Mammary epithelial cell (primary cell): ENCODE measurements at regions of chr5 and their contacts with region 1.

Region 1: GRCh38 chr5:1948663-1949652 is 66.2 kb upstream of the IRX4 start:
- DNase-seq: peak; percentile 99
- H3K4me3 ChIP-seq: peak overlapping the region; percentile 18 to 56 (median 28)
- H3K27ac ChIP-seq: peak overlapping the region; percentile 95
- H3K4me1 ChIP-seq: peaks cover 15% of the 10 kb centered on the region
- H3K27me3 ChIP-seq: no peaks in the 10 kb centered on the region
- CTCF ChIP-seq: no peak

Region 2: GRCh38 chr5:1874771-1875220 is 74.2 kb before region 1 on chr5:
- CTCF ChIA-PET with region 1: no interaction called
- dilution Hi-C with region 1: loop called (anchors 5 kb)
- in situ Hi-C with region 1: no loop called
- intact Hi-C with region 1: no loop called
- DNase-seq: no peak
- H3K4me3 ChIP-seq: no peak overlapping the region
- H3K27ac ChIP-seq: no peak overlapping the region
- H3K4me1 ChIP-seq: no peaks in the 10 kb centered on the region
- H3K27me3 ChIP-seq: no peaks in the 10 kb centered on the region
- CTCF ChIP-seq: no peak

Region 3: DNA sequence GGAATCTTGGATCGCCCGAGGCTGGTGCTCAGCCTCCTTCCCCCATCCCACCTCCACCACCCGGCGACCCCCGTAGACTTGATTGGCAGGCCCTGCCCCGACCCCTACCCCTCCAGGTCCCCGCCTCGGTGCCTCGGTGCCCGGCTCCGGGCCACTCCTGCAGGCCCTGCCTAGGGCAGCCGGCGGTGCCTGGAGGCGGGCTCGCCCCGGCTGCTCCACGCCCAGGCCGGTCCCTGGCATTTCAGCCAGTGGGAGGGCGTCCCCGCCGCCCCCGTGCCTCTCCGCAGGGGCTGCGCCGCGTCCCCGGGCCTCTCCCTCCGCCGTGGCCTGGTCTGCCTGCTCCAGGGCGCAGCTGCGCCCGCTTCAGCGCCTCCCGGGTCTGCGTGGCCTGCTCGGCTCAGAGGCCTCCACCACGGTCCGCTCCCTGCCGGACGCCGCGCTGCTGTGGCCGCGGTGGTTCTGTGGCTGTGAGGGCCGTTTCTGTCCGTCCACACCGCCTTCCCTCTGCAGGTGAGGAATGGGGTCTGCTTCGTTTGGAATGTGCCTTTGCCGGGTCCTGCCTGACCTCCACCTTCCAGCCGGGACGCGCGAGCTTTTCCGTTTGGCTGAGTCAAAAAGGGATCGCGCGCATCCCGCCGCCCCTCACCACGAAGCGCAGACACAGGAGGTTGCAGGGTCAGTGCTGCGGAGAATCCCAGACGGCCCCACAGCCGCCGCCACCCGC is 17.9 kb before region 1 on chr5:
- CTCF ChIA-PET with region 1: no interaction called
- dilution Hi-C with region 1: no loop called
- in situ Hi-C with region 1: no loop called
- intact Hi-C with region 1: loop called (anchors 2 kb)
- DNase-seq: peak; percentile 64
- H3K4me3 ChIP-seq: peak overlapping the region; percentile 48 to 71 (median 66)
- H3K27ac ChIP-seq: peak overlapping the region; percentile 75
- H3K4me1 ChIP-seq: peaks cover 40% of the 10 kb centered on the region
- H3K27me3 ChIP-seq: no peaks in the 10 kb centered on the region
- CTCF ChIP-seq: no peak

Region 4: GRCh38 chr5:1962619-1963355 is 13.8 kb after region 1 on chr5:
- CTCF ChIA-PET with region 1: no interaction called
- dilution Hi-C with region 1: no loop called
- in situ Hi-C with region 1: no loop called
- intact Hi-C with region 1: loop called (anchors 1 kb)
- DNase-seq: peak; percentile 95
- H3K4me3 ChIP-seq: no peak overlapping the region
- H3K27ac ChIP-seq: peak overlapping the region; percentile 100
- H3K4me1 ChIP-seq: peaks cover 34% of the 10 kb centered on the region
- H3K27me3 ChIP-seq: no peaks in the 10 kb centered on the region
- CTCF ChIP-seq: no peak

Region 5: GRCh38 chr5:2007878-2008501 is 59.0 kb after region 1 on chr5:
- CTCF ChIA-PET with region 1: no interaction called
- dilution Hi-C with region 1: loop called (anchors 5 kb)
- in situ Hi-C with region 1: no loop called
- intact Hi-C with region 1: no loop called
- DNase-seq: peak; percentile 14
- H3K4me3 ChIP-seq: peak overlapping the region; percentile 14 to 21 (median 21)
- H3K27ac ChIP-seq: peak overlapping the region; percentile 31
- H3K4me1 ChIP-seq: peaks cover 16% of the 10 kb centered on the region
- H3K27me3 ChIP-seq: peaks cover 3% of the 10 kb centered on the region
- CTCF ChIP-seq: no peak

Region 6: GRCh38 chr5:2756211-2757152 is 807.5 kb after region 1 on chr5:
- CTCF ChIA-PET with region 1: no interaction called
- dilution Hi-C with region 1: no loop called
- in situ Hi-C with region 1: no loop called
- intact Hi-C with region 1: no loop called
- DNase-seq: peak; percentile 30
- H3K4me3 ChIP-seq: peak overlapping the region in 2 of 3 experiments; percentile 13 to 22
- H3K27ac ChIP-seq: no peak overlapping the region
- H3K4me1 ChIP-seq: peaks cover 59% of the 10 kb centered on the region
- H3K27me3 ChIP-seq: no peaks in the 10 kb centered on the region
- CTCF ChIP-seq: no peak